ENCODE measurements at regions of chr14 and their contacts with region 1.

Region 1: DNA sequence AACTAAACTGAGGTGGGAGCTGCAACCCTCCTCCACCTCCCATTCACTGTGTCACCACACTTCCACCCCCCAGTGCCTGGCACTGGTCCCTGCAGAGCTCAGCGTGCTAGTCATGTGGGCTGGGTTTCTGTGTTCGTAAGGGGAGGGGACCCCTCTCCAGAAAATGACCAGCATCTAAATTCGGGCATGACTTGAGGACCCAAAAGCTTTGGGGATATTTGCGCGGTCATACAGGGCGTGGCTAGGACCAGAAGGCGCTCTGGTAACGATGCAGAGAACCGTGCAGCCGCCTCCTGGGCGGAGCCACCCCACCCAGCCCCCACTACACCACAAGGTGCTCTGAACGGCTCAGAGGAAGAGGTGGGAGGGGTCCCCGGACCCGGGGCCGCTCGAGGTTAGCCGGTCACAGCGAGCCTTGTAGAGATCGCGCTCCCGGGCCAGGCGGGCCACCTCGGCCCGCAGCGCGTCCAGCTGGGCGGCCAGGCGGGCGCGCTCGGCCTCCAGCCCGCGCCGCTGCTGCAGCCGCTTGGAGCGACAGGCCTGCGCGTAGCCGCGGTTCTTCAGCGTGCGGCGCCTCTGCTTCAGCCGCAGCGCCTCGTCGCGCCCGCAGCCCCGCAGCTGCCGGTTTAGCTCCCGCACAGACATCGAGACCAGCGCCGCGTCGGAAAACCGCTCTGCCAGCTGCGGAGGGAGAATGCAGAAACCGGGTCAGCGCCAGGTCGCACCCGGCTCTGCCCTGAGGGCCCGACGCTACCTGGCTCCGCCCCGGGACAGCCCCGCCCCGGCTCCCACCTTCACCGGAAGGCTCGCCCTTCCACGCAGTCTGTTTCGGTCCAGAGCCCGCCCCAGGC is 9.8 kb downstream of the CPNE6 start:
- DNase-seq: peak; percentile 87
- H3K4me3 Mint-ChIP-seq: peak overlapping the region; percentile 75
- H3K27ac Mint-ChIP-seq: peak overlapping the region; percentile 75
- H3K4me1 Mint-ChIP-seq: peaks cover 35% of the 10 kb centered on the region
- H3K27me3 Mint-ChIP-seq: peaks cover 50% of the 10 kb centered on the region

Region 2: DNA sequence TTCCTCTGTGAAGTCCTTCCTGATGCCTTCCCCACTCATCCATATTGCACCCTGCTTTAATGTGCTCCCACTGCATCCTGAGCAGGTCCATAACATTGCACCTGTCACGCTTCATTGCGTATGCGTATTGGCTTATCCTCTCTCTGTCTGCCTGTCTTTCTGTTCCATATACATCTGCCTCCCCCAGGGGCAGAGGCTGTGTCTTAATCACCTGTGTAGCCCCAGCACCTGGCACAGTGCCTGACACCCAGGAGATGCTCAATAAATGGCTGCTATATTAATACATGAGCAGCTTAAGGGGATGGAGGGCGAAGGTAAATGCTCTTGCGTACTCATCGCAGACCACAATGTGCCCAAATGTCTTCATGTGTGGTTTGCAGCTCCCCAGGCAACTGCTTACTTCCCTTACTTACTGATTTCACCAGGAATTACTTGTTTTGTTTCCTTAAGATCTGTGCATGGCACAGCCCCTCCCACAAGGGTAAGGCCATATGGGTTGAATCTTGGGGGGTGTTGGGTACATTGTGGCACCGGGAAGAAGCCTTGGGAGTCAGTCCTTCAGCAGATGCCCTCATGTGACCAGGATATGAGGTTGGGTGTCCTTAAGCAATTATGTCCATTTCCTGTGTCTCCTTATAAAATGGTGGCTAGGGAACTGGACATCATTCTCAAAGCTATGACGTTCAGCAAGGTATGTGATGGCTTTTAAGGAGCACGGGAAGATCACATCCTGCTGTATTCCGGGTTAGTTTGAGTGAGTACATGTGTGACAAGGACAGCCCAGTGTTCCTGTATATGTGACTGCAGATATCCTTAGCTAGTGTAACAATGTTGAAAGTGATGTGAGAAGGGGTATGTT is 10.6 kb before region 1 on chr14:
- CTCF ChIA-PET with region 1: interaction called, 11 read pairs
- DNase-seq: no peak
- H3K4me3 Mint-ChIP-seq: no peak overlapping the region
- H3K27ac Mint-ChIP-seq: no peak overlapping the region
- H3K4me1 Mint-ChIP-seq: peaks cover 10% of the 10 kb centered on the region
- H3K27me3 Mint-ChIP-seq: peaks cover 47% of the 10 kb centered on the region

Region 3: GRCh38 chr14:24093901-24094761 is 13.0 kb after region 1 on chr14 and contains the start of gene PCK2:
- CTCF ChIA-PET with region 1: interaction called, 107 read pairs
- DNase-seq: peak; percentile 86
- H3K4me3 Mint-ChIP-seq: peak within 1 kb of the TSS; percentile 92
- H3K27ac Mint-ChIP-seq: peak within 1 kb of the TSS; percentile 92
- H3K4me1 Mint-ChIP-seq: peaks cover 39% of the 10 kb centered on the region
- H3K27me3 Mint-ChIP-seq: no peaks in the 10 kb centered on the region

Region 4: DNA sequence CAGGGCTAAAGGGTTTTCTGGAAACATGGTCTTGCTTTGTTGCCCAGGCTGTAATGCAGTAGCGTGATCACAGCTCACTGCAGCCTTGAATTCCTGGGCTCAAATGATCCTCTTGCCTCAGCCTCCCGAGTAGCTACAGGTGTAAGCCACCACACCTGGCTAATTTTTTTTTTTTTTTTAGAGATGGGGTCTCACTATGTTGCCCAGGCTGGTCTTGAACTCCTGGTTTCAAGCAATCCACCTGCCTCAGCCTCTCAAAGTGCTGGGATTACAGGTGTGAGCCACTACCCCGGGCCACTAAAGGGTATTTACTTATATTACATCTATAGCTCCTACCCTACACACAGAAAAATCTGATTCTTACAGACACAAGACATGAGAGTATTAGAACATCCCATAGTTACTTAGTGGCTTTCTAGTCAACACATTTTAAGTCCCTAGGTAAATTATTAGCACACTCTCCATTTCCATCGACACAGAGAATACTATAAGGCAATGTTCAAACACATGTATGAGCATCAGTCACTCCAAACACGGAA is 27.3 kb after region 1 on chr14:
- CTCF ChIA-PET with region 1: interaction called, 41 read pairs
- DNase-seq: no peak
- H3K4me3 Mint-ChIP-seq: no peak overlapping the region
- H3K27ac Mint-ChIP-seq: peak overlapping the region; percentile 97
- H3K4me1 Mint-ChIP-seq: peaks cover 37% of the 10 kb centered on the region
- H3K27me3 Mint-ChIP-seq: no peaks in the 10 kb centered on the region

Measured in activated naive CD4-positive, alpha-beta T cell treated with anti-CD3 and anti-CD28 coated beads, Interleukin-2, amount 10 ng/mL, durations not matched to agents 7 days and 5 days (primary cell).